B cell (primary cell): ENCODE measurements at regions of chr17 and their contacts with region 1.

Region 1: DNA sequence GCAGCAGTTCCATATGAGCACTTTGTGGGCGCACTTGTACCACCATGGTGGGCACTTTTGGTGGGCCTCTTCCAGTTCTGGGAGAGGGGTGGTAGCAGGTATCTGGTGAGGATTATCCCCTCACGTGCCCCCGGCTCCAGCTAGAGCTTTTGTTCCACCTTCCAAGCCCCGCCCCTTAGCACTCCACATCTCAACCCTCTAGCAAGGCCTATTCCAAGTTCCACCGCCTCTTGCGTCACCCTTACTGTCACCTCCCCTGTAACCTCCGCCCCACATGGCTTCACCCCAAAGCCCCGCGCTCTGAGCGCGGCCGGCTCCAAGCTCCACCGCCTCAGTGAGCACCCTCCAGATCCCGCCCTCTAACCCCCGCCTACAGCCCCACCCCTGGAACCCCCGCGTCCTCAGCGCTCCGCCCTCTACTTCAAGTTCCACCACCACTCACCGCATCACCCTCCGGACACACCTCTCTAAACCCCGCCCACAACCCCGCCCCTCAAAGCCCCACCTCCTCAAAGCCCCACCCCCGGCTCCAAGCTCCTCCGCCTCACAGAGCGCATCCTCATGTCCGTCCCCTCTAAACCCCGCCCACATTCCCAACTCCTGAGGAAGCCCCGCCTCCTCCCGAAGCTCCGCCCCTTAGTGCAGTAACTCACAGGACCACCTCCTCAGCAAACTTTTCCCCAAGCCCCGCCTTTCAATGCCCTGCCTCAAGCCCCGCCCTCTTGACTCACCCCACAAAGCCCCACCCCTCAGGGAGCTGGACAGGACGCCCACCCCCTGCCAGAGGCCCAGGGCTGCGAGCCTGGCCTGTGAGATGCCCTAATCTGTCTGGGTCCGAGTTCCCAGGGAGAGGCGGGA is 11.1 kb downstream of the SCN4A start:
- DNase-seq: peak; percentile 74
- ATAC-seq: peak; percentile 85
- H3K4me3 ChIP-seq: peak overlapping the region in 1 of 5 experiments; percentile 1
- H3K4me3 Mint-ChIP-seq: peak overlapping the region; percentile 70
- H3K27ac ChIP-seq: no peak overlapping the region
- H3K27ac Mint-ChIP-seq: no peak overlapping the region
- H3K4me1 ChIP-seq: peaks cover 9 to 18% of the 10 kb centered on the region in 2 donors
- H3K4me1 Mint-ChIP-seq: peaks cover 16% of the 10 kb centered on the region
- H3K27me3 ChIP-seq: no peaks in the 10 kb centered on the region
- H3K27me3 Mint-ChIP-seq: no peaks in the 10 kb centered on the region
- CTCF ChIP-seq: no peak

Region 2: DNA sequence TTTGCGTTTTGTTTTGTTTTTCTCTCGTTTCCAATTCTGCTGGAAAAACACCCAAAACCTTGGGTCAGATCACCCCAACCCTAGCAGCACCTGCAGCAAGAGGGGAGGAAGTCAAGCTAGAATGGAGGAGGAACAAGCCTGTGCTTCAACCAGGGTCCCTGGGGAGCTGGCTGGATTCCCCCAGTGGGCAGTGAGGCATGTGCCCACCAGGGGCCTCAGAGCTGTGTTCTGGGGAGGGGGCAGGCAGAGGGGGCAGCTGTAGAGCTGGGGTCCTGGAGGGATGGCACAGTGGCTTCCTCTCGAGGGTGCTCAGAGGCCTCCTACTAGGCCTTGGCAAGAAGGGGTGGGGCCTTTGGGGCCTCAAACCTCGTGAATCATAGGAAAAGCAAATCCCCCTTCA is 35.9 kb before region 1 on chr17:
- CTCF ChIA-PET with region 1: interaction called, 504 read pairs
- POLR2A ChIA-PET with region 1: interaction called, 15 read pairs
- intact Hi-C with region 1: no loop called
- DNase-seq: peak; percentile 91
- ATAC-seq: peak; percentile 67
- H3K4me3 ChIP-seq: peak overlapping the region in 1 of 5 experiments; percentile 15
- H3K4me3 Mint-ChIP-seq: peak overlapping the region; percentile 74
- H3K27ac ChIP-seq: peak overlapping the region; percentile 85 to 89
- H3K27ac Mint-ChIP-seq: peak overlapping the region; percentile 92
- H3K4me1 ChIP-seq: peaks cover 87 to 98% of the 10 kb centered on the region in 2 donors
- H3K4me1 Mint-ChIP-seq: peaks cover 85% of the 10 kb centered on the region
- H3K27me3 ChIP-seq: no peaks in the 10 kb centered on the region
- H3K27me3 Mint-ChIP-seq: no peaks in the 10 kb centered on the region
- CTCF ChIP-seq: no peak

Region 3: DNA sequence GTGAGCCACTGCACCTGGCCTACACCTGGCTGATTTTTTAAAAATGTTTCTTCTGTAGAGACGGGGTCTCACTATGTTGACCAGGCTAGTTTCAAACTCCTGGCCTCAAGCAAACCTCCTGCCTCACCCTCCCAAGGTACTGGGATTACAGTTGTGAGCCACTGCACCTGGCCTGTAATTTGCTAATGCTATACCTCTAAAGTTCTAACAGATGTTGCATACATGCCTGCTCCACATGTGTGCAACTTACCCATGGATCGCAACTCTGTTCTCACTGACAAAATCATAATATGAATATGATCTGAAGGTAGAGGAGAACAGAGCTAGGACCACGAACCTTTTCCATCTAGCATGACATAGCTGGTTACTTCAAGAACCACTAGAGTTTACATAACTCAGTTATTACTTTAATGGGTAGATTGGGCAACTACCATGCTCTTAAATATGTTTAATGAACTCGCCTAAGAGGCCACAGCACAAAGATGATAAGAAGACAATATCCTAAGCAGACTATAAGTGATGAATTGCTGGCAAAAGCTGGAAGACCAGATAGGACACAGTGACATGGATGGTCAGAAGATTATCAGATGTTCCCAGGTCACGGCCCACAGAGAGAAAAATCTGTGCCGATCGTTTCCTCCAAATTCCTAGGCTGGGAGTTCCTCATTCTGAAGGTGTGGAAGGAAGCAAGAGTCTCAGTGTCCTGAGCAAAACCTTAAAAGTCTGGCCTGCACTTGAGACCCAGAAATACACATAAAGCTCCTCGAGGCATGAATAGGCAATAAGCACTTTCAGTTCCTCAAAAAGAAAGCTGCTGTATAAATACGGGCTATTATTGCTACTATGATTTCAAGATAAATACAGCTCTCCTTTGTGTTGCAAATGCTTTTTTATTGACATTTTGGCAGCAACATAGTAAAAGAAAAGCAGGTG is 112.5 kb after region 1 on chr17:
- CTCF ChIA-PET with region 1: no interaction called
- POLR2A ChIA-PET with region 1: no interaction called
- intact Hi-C with region 1: no loop called
- DNase-seq: peak; percentile 71
- ATAC-seq: peak; percentile 90
- H3K4me3 ChIP-seq: peak overlapping the region in 3 of 5 experiments; percentile 6 to 42 (median 13)
- H3K4me3 Mint-ChIP-seq: peak overlapping the region; percentile 53
- H3K27ac ChIP-seq: no peak overlapping the region
- H3K27ac Mint-ChIP-seq: peak overlapping the region; percentile 5
- H3K4me1 ChIP-seq: peaks cover 27 to 37% of the 10 kb centered on the region in 2 donors
- H3K4me1 Mint-ChIP-seq: peaks cover 33% of the 10 kb centered on the region
- H3K27me3 ChIP-seq: no peaks in the 10 kb centered on the region
- H3K27me3 Mint-ChIP-seq: no peaks in the 10 kb centered on the region
- CTCF ChIP-seq: no peak

Region 4: DNA sequence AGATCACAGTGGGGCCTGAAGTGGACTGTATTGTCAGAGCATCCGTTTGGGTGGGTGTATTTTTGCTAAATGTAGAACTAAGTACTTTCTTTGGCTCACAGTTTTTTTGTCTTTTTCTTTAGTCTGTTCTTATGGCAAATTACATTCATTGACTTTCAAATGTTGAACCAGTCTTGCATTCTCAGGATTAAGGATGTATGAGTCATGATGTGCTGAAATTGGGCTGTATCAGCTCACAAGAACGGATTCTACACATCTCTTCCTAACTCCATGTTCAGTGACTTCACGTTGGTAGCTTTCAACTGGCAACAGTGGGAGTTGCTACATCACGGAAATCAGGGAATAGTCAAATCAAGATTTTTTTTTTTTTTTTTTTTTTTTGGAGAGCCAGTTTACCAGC is 235.0 kb after region 1 on chr17:
- CTCF ChIA-PET with region 1: no interaction called
- POLR2A ChIA-PET with region 1: interaction called, 13 read pairs
- intact Hi-C with region 1: no loop called
- DNase-seq: no peak
- ATAC-seq: no peak
- H3K4me3 ChIP-seq: no peak overlapping the region
- H3K4me3 Mint-ChIP-seq: no peak overlapping the region
- H3K27ac ChIP-seq: no peak overlapping the region
- H3K27ac Mint-ChIP-seq: no peak overlapping the region
- H3K4me1 ChIP-seq: no peaks in the 10 kb centered on the region
- H3K4me1 Mint-ChIP-seq: no peaks in the 10 kb centered on the region
- H3K27me3 ChIP-seq: no peaks in the 10 kb centered on the region
- H3K27me3 Mint-ChIP-seq: no peaks in the 10 kb centered on the region
- CTCF ChIP-seq: no peak